ENCODE measurements at regions of chr1 and their contacts with region 1.

Region 1: DNA sequence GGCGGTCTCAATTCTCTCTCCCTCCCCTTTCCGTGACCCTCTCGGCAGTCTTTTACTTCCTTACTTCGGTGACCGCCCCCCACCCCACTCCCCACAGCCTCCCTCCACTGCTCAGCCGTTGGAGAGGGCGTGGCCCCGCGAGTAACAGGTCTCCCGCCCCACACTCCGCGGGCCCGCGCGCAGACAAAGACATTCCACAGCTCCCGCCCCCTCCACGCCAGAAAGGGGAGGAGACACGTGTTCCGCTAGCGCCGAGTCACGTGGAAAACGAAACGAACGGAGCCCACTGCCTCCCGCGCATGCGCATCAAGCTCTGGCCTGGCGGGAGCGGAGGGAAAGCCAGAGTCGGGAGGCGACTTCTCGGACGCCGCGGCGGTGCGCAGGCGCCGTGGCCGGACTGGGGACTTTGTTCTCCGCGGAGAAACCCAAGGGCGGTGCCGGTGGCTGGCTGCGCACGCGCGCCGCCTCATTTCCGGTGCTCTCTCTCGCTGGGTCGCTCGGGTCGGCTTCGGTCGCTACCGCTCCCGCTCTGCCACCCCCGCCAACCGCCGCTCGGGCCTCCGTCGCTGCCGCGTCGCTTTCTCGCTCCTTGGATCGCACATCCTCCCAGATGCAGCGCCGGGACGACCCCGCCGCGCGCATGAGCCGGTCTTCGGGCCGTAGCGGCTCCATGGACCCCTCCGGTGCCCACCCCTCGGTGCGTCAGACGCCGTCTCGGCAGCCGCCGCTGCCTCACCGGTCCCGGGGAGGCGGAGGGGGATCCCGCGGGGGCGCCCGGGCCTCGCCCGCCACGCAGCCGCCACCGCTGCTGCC is at the start of gene KHDRBS1:
- DNase-seq: peak; percentile 99
- H3K4me3 Mint-ChIP-seq: peak within 1 kb of the TSS; percentile 96
- H3K27ac Mint-ChIP-seq: peak within 1 kb of the TSS; percentile 95
- H3K4me1 Mint-ChIP-seq: peaks cover 22% of the 10 kb centered on the region
- H3K27me3 Mint-ChIP-seq: no peaks in the 10 kb centered on the region
- total RNA-seq, gene KHDRBS1: 177 and 178 TPM in 2 replicates

Region 2: DNA sequence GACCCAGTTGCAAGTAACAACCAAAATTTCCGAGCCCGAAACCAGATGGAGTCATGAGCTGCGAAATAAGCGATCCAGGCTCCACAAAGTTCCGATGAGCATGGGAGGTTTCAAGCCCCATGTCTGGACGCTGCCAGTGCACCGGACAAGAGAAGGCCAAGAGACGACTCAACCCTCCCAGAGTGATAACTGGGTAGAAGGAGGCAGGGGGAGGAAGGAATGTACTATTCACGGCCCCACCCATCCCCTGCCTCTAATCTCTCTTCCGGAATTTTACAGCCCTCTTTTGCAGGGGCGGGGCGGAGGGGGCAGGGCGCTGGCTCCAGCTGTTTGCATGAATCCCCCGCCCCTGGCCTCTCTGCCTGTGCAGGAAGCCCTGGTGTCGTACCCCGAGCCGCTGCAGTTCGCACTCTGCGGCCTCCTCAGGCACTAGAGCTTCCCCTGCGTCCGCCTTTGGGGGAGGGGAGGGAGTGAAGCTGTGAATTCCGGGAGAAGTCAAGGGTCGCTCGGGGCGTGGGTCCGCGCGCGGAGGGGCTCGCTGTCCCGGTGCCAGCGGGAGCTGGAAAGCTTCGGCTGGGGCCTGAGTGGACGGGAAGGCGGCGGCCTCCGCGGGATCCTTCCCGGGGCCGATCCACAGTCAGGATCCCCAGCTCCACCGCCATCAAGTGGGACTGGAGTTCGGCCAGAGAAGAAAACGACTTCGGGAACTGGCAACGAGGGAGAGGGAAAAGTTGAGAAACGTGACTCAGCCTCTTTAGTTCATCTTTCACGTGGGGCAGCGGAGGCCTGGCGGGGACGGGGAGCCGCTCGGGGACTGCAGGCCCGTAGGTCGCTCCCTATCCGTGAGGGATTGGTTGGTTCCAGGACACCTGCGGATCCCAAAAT is 69.1 kb before region 1 on chr1:
- intact Hi-C with region 1: loop called (anchors 5 kb)
- DNase-seq: peak; percentile 87
- H3K4me3 Mint-ChIP-seq: peak overlapping the region; percentile 78
- H3K27ac Mint-ChIP-seq: peak overlapping the region; percentile 94
- H3K4me1 Mint-ChIP-seq: peaks cover 39% of the 10 kb centered on the region
- H3K27me3 Mint-ChIP-seq: no peaks in the 10 kb centered on the region

Region 3: GRCh38 chr1:32001863-32002262 is 11.7 kb before region 1 on chr1:
- intact Hi-C with region 1: no loop called
- DNase-seq: no peak
- H3K4me3 Mint-ChIP-seq: no peak overlapping the region
- H3K27ac Mint-ChIP-seq: no peak overlapping the region
- H3K4me1 Mint-ChIP-seq: peaks cover 6% of the 10 kb centered on the region
- H3K27me3 Mint-ChIP-seq: no peaks in the 10 kb centered on the region